ENCODE measurements at regions of chr17 and their contacts with region 1.

Region 1: DNA sequence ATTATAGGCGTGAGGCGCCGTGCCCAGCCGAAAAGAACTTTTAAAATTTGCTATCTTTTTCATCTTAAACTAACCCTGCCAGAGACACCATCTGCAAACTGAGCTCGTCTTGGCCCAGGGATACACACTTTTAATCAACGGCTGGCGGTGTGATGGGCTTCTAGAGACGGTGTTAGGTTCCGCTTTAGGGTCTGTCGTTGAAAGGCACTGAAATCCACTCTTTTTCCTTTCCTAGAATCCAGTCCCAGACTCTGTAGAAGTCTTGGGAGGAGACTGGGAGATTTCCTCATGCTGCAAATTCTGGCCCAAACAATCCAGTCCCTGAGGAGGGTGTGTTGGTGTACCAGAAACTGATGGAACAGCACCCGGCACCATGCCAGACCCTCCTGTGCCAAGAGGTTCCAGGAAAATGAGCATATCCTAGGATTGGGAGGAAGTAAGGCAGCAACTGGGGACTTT is 52.0 kb upstream of the TEX2 start:
- DNase-seq: peak; percentile 92 to 93
- ATAC-seq: peak; percentile 83 to 96 (median 92)
- H3K4me3 ChIP-seq: no peak overlapping the region
- H3K27ac ChIP-seq: peak overlapping the region; percentile 41 to 80 (median 75)
- H3K4me1 ChIP-seq: peaks cover 0 to 47% (median 28%) of the 10 kb centered on the region in 9 donors
- H3K27me3 ChIP-seq: no peaks in the 10 kb centered on the region
- CTCF ChIP-seq: no peak

Region 2: DNA sequence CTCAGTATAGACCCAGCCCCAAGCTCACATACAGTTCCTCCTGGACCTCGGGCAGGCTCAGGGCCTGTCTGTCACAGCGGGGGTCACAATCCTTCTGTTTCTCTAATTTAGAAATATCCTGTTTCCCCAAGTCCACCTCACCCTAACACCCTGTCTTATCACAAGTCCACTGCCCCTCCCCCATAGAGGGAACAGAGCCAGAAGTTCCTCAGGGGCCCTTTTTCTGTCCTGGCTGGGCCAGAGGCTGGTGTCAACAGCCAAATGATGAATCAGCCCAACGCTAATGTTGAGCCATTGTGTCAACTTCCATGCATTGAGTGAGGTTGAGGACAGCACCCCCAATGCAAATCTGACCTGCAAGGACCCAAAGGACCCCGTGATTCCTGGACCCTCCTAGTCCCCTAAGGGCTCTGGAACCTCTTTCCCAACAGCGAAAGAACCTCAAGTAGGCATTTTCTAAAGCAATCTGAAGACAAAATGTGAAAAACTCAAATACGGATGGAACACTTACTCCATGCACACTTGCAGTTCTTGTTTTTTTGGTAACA is 17.0 kb after region 1 on chr17:
- intact Hi-C with region 1: loop called in 1 of 10 experiments (anchors 2 kb)
- DNase-seq: peak; percentile 52 to 84
- ATAC-seq: peak; percentile 26 to 55 (median 38)
- H3K4me3 ChIP-seq: no peak overlapping the region
- H3K27ac ChIP-seq: peak overlapping the region; percentile 63 to 95 (median 82)
- H3K4me1 ChIP-seq: peaks cover 20 to 100% (median 97%) of the 10 kb centered on the region in 9 donors
- H3K27me3 ChIP-seq: no peaks in the 10 kb centered on the region
- CTCF ChIP-seq: no peak

Region 3: DNA sequence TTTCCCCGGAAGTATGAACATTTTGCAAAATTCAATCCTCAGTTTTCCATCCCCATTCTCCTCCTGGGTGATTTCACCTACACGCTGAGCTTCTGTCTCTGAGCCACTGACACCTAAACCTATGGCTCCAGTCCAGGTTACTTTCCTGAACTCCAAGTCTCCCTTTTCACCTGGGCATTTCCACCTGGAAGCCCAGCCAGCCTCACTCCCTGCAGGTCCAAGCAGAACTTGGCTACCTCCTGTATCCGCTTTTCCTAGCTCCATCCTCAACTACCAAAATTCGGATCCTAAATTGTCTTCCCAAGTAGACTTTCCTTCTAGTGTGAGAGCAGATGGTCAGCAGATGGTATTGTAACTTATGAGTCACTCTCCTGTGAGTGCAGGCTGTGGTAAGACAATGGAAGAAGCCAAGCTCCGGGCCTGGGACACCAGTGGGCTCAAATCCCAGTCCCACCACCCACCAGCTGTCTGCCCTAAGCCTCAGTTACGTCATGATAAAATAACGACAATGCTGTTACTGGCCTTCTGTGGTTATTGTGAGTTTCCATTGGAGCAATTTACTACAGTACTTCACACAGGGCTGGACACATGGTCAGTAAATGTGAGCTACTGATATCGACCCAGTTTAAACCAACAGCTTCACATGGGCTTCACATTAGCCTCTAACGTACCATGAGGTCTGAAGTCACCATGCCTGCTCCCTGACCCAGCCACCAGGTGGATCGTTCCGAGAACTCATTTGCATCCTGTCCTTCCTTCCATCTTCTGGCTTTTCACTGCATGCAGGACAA is 42.3 kb after region 1 on chr17:
- intact Hi-C with region 1: loop called in 1 of 10 experiments (anchors 5 kb)
- DNase-seq: peak; percentile 58 to 66
- ATAC-seq: peak; percentile 83 to 93 (median 90)
- H3K4me3 ChIP-seq: no peak overlapping the region
- H3K27ac ChIP-seq: peak overlapping the region; percentile 40 to 85 (median 77)
- H3K4me1 ChIP-seq: peaks cover 15 to 83% (median 67%) of the 10 kb centered on the region in 9 donors
- H3K27me3 ChIP-seq: no peaks in the 10 kb centered on the region
- CTCF ChIP-seq: no peak

Region 4: DNA sequence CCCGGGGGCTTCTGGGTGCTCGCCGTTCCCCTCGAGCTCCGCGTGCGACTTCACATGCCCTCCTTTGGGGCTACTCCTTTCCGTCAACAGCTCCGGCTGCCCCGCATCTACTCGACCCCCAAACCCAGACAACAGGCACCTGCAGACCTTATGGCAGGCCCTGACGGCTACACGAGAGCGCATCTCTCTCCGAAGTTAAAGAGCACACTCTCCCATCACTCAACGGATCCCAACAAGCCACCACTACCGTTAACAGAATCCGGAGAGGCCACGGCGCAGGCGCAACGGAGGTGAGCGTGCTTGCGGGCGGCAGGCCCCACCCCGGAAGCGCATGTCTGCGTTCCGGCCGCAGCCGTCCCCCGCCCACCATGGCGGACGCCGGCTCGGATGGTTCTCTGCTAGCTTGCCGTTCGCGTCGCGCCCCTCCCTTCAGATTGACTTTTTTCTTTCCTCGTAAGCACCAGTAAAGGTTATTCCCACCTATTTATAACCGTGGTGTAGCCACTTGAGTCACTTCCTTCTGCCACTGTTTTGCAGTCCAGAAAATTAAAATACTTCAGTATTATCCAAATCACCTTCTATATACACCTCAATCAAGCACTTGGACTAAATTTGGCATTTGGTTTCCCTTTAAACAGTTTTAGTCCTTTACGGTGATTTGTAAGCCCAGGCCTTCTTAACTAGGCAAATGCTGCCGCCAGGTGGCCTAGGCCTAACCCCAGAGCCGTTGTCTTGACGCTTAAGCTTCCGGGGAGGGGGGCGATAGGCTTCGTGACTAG is 181.9 kb after region 1 on chr17 and contains the start of gene POLG2:
- intact Hi-C with region 1: loop called in 4 of 10 experiments (anchors 5 to 10 kb)
- DNase-seq: peak; percentile 92 to 94
- ATAC-seq: peak; percentile 94 to 98 (median 97)
- H3K4me3 ChIP-seq: peak within 1 kb of the TSS; percentile 42 to 85 (median 76)
- H3K27ac ChIP-seq: peak within 1 kb of the TSS; percentile 39 to 91 (median 82)
- H3K4me1 ChIP-seq: peaks cover 13 to 80% (median 69%) of the 10 kb centered on the region in 9 donors
- H3K27me3 ChIP-seq: no peaks in the 10 kb centered on the region
- CTCF ChIP-seq: peak in 7 of 9 donors; percentile 16 to 54 (median 49)
- total RNA-seq, gene POLG2: 5.1 to 11.1 (median 6.5) TPM

Region 5: GRCh38 chr17:64781014-64781753 is 466.1 kb after region 1 on chr17:
- intact Hi-C with region 1: no loop called
- DNase-seq: peak; percentile 74 to 76
- ATAC-seq: peak; percentile 39 to 55 (median 50)
- H3K4me3 ChIP-seq: peak overlapping the region; percentile 41 to 70 (median 64)
- H3K27ac ChIP-seq: peak overlapping the region in 9 of 10 donors; percentile 71 to 92 (median 74)
- H3K4me1 ChIP-seq: peaks cover 31 to 63% (median 52%) of the 10 kb centered on the region in 9 donors
- H3K27me3 ChIP-seq: peaks cover 0 to 69% (median 36%) of the 10 kb centered on the region in 7 donors
- CTCF ChIP-seq: no peak